PC-9 (cell line): ENCODE measurements at regions of chr2 and their contacts with region 1.

Region 1: GRCh38 chr2:26681656-26682055 is 10.9 kb upstream of the KCNK3 start:
- DNase-seq: no peak
- H3K4me3 ChIP-seq: no peak overlapping the region
- H3K27ac ChIP-seq: no peak overlapping the region
- H3K4me1 ChIP-seq: peaks cover 8% of the 10 kb centered on the region
- H3K27me3 ChIP-seq: no peaks in the 10 kb centered on the region; the same call in 1 of the 2 replicates
- CTCF ChIP-seq: no peak

Region 2: DNA sequence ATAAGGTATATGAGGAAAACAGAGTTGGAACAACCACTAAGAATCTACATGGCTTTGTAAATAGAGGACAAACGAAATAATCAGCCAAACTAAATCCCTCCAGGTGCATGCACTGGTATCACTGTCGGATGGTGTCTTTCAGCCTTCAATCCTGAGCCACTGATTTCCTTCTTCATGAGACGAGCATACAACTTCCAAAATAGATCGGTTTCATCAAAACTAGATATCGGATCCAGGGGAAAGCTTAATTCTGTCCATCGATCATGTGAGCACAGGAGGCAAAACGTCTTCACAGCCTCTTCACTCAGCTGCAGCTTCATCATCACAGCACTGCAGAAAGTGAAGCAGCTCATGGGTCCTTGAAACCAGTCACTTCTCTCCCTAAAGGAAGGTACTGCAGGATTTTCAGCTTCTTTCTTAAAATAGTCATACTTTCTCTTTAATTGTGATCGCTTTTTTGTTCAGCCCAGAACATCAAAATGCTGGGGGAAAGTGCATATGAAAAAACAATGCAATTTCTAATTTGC is 1088.8 kb before region 1 on chr2:
- CTCF ChIA-PET with region 1: no interaction called
- POLR2A ChIA-PET with region 1: interaction called, 17 read pairs
- intact Hi-C with region 1: no loop called
- DNase-seq: no peak
- H3K4me3 ChIP-seq: no peak overlapping the region
- H3K27ac ChIP-seq: no peak overlapping the region
- H3K4me1 ChIP-seq: no peaks in the 10 kb centered on the region
- H3K27me3 ChIP-seq: no peaks in the 10 kb centered on the region
- CTCF ChIP-seq: no peak